K562 (cell line): ENCODE measurements at regions of chr17 and their contacts with region 1.

Region 1: DNA sequence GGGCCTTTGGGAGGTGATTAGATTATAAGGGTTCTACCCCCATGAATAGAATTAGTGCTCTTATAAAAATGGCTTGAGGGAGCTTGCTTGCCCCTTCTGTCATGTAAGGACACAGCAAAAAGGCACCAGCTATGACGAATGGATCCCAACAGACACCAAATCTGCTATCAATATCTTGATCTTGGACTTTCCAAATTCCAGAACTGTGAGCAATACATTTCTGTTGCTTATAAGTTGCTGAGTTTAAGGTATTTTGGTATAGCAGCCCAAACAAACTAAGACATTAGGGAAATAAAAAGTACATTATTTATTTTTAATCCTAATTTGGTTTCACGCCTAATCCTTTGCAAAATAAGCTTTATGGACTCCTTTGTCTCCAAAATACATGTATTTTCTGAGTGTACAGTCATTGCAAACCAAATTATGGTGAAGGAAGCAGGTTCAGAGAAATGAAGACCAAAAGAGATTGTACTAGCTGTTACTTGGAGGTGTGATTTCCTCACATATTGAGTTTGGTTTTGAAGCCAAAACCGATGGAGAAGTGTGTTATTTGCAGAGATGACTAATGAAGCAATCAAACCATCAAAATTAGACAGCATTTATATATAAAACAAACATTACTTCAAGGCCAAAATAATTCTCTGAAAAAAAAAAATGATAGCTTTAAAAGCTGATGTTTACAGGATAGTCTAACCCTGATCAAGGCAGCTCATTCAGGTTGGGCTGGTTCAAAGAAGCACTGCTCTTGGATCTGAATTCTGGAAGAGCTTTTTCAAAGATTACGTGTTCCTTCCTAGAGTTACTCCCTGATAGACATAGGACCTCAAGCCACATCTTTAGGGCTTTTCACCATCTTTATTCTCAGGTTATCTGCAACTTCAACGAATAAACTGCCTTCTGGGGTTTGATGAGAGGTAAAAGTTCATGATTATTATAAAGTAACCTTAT is 71.6 kb downstream of the MYO1D start:
- DNase-seq: no peak
- ATAC-seq: no peak
- H3K4me3 ChIP-seq: no peak overlapping the region
- H3K27ac ChIP-seq: no peak overlapping the region
- H3K4me1 ChIP-seq: peaks cover 3 to 15% of the 10 kb centered on the region in 2 experiments; a peak in 3 of 5 replicates
- H3K27me3 ChIP-seq: no peaks in the 10 kb centered on the region
- CTCF ChIP-seq: no peak
- EP300 ChIP-seq: no peak
- POLR2A ChIP-seq: no peak
- RAD21 ChIP-seq: no peak

Region 2: GRCh38 chr17:32684087-32684958 is 121.0 kb before region 1 on chr17:
- CTCF ChIA-PET with region 1: no interaction called
- POLR2A ChIA-PET with region 1: no interaction called
- in situ Hi-C with region 1: no loop called
- intact Hi-C with region 1: no loop called
- DNase-seq: no peak
- ATAC-seq: no peak
- H3K4me3 ChIP-seq: no peak overlapping the region
- H3K27ac ChIP-seq: no peak overlapping the region
- H3K4me1 ChIP-seq: no peaks in the 10 kb centered on the region
- H3K27me3 ChIP-seq: no peaks in the 10 kb centered on the region
- CTCF ChIP-seq: no peak
- EP300 ChIP-seq: no peak
- POLR2A ChIP-seq: no peak
- RAD21 ChIP-seq: no peak

Region 3: GRCh38 chr17:32794533-32795246 is 10.6 kb before region 1 on chr17:
- CTCF ChIA-PET with region 1: no interaction called
- POLR2A ChIA-PET with region 1: interaction called, 11 read pairs
- in situ Hi-C with region 1: no loop called
- intact Hi-C with region 1: no loop called
- DNase-seq: peak; percentile 24 to 85 (median 64)
- ATAC-seq: peak; percentile 100
- H3K4me3 ChIP-seq: no peak overlapping the region
- H3K27ac ChIP-seq: peak overlapping the region; percentile 53; the same call in 2 of the 3 replicates
- H3K4me1 ChIP-seq: peaks cover 0 to 24% of the 10 kb centered on the region in 2 experiments; a peak in 3 of 5 replicates
- H3K27me3 ChIP-seq: no peaks in the 10 kb centered on the region
- CTCF ChIP-seq: 0 out of 6 replicates have a peak, but pooled peaks of 1 of the 3 experiments have one; percentile 0
- EP300 ChIP-seq: peak; percentile 3; the same call in 1 of the 2 replicates
- POLR2A ChIP-seq: no peak
- RAD21 ChIP-seq: 0 out of 4 replicates have a peak, but pooled peaks of 1 of the 2 experiments have one; percentile 2